ENCODE measurements at regions of chr22 and their contacts with region 1.

Region 1: DNA sequence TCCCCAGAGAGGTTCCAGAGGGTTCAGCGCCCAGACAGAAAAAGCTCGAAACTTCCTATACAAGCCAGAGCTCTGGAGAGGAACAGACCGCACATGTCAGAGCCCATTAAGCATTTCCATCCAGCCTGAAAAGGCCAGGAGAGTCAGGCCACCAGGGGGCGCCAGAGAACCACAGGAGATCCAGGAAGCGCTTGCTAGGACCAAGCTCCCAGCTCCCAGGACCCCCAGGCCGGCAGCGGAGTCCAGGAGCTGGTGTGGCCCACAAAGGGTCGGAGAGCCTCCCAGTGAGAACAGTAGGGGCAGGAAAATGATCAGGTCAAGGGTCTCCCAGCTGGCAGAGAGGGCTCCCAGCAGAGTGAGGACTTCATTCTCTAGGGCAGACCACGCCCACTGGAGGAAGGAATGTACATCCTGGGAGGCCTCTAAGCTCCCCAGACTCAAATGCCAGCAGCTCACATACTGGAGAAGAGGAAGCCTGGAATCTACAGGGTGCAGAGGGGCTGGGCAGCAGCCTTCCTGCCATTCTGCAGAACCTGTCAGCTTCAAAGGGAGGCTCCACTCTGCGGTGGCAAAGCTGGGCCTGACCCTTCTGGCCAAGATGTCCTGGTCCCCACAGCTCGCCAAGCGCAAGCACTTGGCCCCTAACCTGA is 2.1 kb upstream of the MEI1 start:
- DNase-seq: peak; percentile 87
- H3K4me3 Mint-ChIP-seq: peak overlapping the region; percentile 52
- H3K27ac Mint-ChIP-seq: peak overlapping the region; percentile 49
- H3K4me1 Mint-ChIP-seq: peaks cover 6% of the 10 kb centered on the region
- H3K27me3 Mint-ChIP-seq: no peaks in the 10 kb centered on the region
- CTCF ChIP-seq: peak; percentile 86

Region 2: DNA sequence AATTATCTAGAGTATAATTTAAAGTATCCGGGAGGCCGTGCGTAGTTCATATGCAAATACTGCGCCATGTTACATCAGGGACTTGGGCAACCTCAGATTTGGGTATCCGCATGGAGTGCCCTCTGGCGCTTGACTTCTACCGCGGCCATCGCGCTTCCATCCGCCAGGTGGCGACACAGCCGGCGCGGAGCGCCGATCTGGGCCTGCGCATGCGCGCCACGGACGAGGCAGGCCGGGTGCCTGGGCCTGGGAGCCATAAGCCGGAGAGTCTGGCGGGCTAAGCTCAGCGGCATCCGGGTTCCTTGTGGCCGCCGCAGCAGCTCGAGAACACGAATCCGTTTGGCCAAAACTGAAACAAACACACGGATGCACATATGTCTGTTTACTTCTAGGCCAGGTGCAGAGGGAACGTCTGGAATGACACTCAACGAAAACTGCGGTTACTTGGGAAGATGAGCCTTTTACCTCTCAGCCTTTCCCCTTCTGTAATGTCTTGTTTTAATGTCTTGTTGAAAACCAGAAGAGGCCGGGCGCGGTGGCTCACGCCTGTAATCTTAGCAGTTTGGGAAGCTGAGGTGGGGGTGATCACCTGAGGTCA is 30.5 kb before region 1 on chr22:
- CTCF ChIA-PET with region 1: interaction called, 14 read pairs
- POLR2A ChIA-PET with region 1: interaction called, 6 read pairs
- intact Hi-C with region 1: no loop called
- DNase-seq: peak; percentile 91
- H3K4me3 Mint-ChIP-seq: peak overlapping the region; percentile 64
- H3K27ac Mint-ChIP-seq: peak overlapping the region; percentile 93
- H3K4me1 Mint-ChIP-seq: peaks cover 5% of the 10 kb centered on the region
- H3K27me3 Mint-ChIP-seq: no peaks in the 10 kb centered on the region
- CTCF ChIP-seq: peak; percentile 92

Region 3: GRCh38 chr22:41713004-41713403 is 15.8 kb after region 1 on chr22:
- CTCF ChIA-PET with region 1: interaction called, 28 read pairs
- POLR2A ChIA-PET with region 1: interaction called, 4 read pairs
- intact Hi-C with region 1: no loop called
- DNase-seq: no peak
- H3K4me3 Mint-ChIP-seq: no peak overlapping the region
- H3K27ac Mint-ChIP-seq: no peak overlapping the region
- H3K4me1 Mint-ChIP-seq: no peaks in the 10 kb centered on the region
- H3K27me3 Mint-ChIP-seq: no peaks in the 10 kb centered on the region
- CTCF ChIP-seq: no peak

Region 4: GRCh38 chr22:41746567-41747400 is 49.5 kb after region 1 on chr22:
- CTCF ChIA-PET with region 1: interaction called, 11 read pairs
- POLR2A ChIA-PET with region 1: interaction called, 8 read pairs
- intact Hi-C with region 1: no loop called
- DNase-seq: peak; percentile 90
- H3K4me3 Mint-ChIP-seq: no peak overlapping the region
- H3K27ac Mint-ChIP-seq: no peak overlapping the region
- H3K4me1 Mint-ChIP-seq: no peaks in the 10 kb centered on the region
- H3K27me3 Mint-ChIP-seq: peaks cover 19% of the 10 kb centered on the region
- CTCF ChIP-seq: peak; percentile 67

Region 5: GRCh38 chr22:41805639-41806038 is 108.4 kb after region 1 on chr22:
- CTCF ChIA-PET with region 1: interaction called, 20 read pairs
- POLR2A ChIA-PET with region 1: interaction called, 5 read pairs
- intact Hi-C with region 1: loop called (anchors 2 kb)
- DNase-seq: no peak
- H3K4me3 Mint-ChIP-seq: no peak overlapping the region
- H3K27ac Mint-ChIP-seq: no peak overlapping the region
- H3K4me1 Mint-ChIP-seq: peaks cover 14% of the 10 kb centered on the region
- H3K27me3 Mint-ChIP-seq: no peaks in the 10 kb centered on the region
- CTCF ChIP-seq: no peak

Region 6: GRCh38 chr22:41841085-41841659 is 143.9 kb after region 1 on chr22:
- CTCF ChIA-PET with region 1: interaction called, 14 read pairs
- POLR2A ChIA-PET with region 1: interaction called, 5 read pairs
- intact Hi-C with region 1: no loop called
- DNase-seq: no peak
- H3K4me3 Mint-ChIP-seq: no peak overlapping the region
- H3K27ac Mint-ChIP-seq: peak overlapping the region; percentile 86
- H3K4me1 Mint-ChIP-seq: peaks cover 57% of the 10 kb centered on the region
- H3K27me3 Mint-ChIP-seq: no peaks in the 10 kb centered on the region
- CTCF ChIP-seq: no peak

Region 7: DNA sequence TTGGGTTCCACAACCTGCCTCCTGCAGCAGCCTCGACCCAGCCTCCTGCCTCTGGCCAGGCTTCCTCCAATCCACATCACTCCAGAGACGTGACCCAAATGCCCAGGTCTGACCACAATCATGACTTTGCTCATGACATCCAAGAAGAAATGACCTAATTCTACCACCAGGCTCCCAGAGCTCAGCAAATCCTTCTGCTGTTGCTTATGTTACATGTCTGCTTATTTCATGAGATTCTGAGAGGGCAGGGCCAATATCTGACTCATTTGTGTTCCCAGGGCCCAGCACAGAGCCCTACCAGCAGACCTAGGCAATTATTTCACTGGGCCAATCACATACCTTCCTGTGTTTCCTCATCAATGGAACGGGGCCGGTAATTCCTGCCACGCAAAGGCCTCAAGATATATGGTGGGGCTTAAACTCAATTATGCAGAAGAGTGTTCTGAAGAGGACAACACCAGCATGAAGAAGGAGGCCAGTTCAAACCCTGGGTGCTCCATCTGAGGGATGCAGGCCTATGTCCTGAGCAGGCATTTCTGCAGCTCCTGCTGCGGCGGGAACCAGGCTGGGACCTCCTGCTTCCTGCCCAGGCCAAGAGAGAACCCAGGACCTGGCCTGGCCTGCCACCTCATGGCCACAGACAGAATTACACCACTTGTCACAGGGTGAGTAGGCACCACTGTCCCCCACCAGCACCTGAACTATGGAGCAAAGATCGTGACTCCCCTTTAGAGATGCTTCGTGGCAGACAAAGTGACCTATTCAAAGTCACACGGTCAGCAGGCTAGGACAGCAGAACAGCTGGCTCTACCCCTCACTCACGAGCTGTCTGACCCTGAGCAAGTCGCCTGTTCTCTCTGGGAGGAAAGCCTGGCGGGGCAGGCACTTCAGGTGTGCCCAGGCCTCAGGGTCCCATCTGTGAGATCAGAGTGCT is 243.8 kb after region 1 on chr22:
- CTCF ChIA-PET with region 1: interaction called, 50 read pairs
- POLR2A ChIA-PET with region 1: interaction called, 6 read pairs
- intact Hi-C with region 1: loop called (anchors 1 kb)
- DNase-seq: peak; percentile 78
- H3K4me3 Mint-ChIP-seq: peak overlapping the region; percentile 7
- H3K27ac Mint-ChIP-seq: peak overlapping the region; percentile 91
- H3K4me1 Mint-ChIP-seq: peaks cover 24% of the 10 kb centered on the region
- H3K27me3 Mint-ChIP-seq: no peaks in the 10 kb centered on the region
- CTCF ChIP-seq: peak; percentile 95